Activated T-helper 1 cell treated with anti-CD3 and anti-CD28 coated beads, Interleukin-12 subunit alpha, Interleukin-12 subunit beta, Interleukin-2, Interleukin-4 antibody, amounts not matched to agents 30 ng/mL and 10 ng/mL and 1 ng/mL, durations not matched to agents 14 hours and 24 hours and 36 hours (primary cell): ENCODE measurements at regions of chr17 and their contacts with region 1.

Region 1: DNA sequence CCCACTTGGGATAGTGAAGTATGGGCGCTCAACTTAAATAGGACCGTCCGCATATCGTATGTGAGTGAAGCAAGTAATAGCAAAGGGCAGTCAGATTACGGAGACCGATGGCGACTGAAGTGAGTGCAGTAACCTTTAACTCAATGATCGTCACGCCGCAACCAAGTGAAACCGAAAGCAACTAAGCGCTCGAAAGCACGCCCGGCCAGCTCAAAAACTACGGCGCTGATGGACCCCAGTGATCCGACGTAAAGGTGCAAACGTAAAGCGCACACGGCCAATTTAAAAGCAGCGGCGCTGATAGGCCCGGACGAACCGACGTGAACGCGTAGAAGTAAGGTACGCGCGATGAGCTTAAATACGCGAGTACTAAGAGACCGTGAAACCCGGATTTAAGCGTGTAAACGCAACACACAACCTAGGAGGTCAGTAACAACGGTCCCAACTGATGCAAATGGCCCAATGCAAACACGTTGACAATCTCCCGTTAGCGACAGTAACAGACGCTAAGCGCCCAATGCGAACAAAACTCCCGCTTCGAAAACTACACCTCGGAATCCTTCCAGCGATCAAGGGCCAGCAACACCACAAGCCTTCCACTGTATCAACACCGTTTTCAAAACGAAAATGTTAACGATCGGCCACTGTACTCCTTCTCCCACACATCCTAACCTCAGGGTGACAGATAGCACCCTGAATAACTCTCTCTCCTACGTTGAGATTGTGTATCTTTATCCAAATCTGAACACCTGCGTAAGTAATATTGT is 37.9 kb upstream of the ARL4D start:
- DNase-seq: peak; percentile 92
- H3K4me3 Mint-ChIP-seq: peak overlapping the region; percentile 85
- H3K27ac Mint-ChIP-seq: peak overlapping the region; percentile 100
- H3K4me1 Mint-ChIP-seq: peaks cover 40% of the 10 kb centered on the region
- H3K27me3 Mint-ChIP-seq: no peaks in the 10 kb centered on the region

Region 2: DNA sequence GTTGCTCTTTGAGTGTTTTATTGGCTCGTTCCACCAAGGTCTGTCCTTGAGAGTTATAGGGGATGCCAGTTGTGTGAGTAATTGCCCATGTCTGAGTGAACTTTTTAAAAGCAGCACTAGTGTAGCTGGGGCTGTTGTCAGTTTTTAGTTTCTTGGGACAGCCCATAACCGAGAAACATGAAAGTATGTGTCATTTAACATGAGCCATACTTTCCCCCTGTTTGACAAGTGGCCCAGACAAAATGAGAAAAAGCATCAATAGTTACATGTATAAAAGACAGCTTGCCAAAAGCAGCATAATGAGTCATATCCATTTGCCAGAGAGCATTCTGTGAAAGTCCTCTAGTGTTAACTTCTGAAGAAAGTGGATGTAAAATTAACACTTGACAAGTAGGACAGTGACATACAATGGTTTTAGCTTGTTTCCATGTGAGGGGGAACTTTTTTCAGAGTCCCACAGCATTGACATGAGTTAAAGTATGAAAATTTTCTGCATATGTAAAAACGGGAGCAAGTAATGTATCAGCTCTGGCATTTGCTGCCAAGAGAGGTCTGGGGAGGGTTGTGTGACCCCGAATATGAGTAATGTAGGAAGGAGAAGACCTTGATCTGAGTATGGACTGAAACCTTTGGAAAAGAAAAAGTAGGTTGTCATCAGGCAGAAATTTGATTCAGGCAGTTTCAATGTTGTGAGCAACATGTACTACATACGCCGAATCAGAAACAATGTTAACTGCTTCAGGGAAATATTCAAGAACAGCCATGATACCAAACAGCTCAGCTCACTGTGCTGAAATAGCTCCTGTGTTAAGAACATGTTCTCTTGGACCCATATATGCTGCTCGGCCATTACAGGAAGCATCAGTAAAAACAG is 19.0 kb before region 1 on chr17:
- intact Hi-C with region 1: loop called (anchors 1 kb)
- DNase-seq: no peak
- H3K4me3 Mint-ChIP-seq: peak overlapping the region; percentile 34
- H3K27ac Mint-ChIP-seq: peak overlapping the region; percentile 91
- H3K4me1 Mint-ChIP-seq: peaks cover 14% of the 10 kb centered on the region
- H3K27me3 Mint-ChIP-seq: peaks cover 4% of the 10 kb centered on the region